Transverse colon (tissue), 4 donors: ENCODE measurements at regions of chr9 and their contacts with region 1.

Region 1: GRCh38 chr9:104177003-104177611 is 83.0 kb downstream of the SMC2 start:
- DNase-seq: no peak
- H3K4me3 ChIP-seq: no peak overlapping the region
- H3K27ac ChIP-seq: no peak overlapping the region
- H3K4me1 ChIP-seq: peaks cover 0 to 8% (median 0%) of the 10 kb centered on the region in 4 donors
- H3K27me3 ChIP-seq: no peaks in the 10 kb centered on the region
- CTCF ChIP-seq: peak; percentile 26 to 51 (median 43)
- EP300 ChIP-seq: no peak
- POLR2A ChIP-seq: no peak

Region 2: DNA sequence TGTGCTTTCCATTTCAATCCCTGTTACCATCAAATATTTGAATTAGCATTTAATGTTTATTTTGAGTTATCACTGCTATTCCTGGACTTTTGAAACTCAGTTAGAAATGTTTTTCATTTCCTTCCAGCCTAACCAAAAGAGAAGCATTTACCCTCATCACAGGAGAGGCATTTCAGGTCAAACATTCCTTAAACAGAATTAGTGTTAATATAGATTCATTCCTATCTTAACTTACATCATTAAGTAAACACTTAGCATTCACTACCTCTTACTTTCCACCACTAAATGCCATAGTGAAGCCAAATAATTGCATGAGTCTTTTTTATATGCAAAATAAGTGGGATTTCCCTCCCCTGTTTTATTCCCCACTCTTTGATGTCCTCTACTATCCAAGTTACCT is 190.4 kb after region 1 on chr9:
- in situ Hi-C with region 1: loop called in 1 of 4 experiments (anchors 25 kb)
- intact Hi-C with region 1: no loop called
- DNase-seq: no peak
- H3K4me3 ChIP-seq: no peak overlapping the region
- H3K27ac ChIP-seq: no peak overlapping the region
- H3K4me1 ChIP-seq: no peaks in the 10 kb centered on the region
- H3K27me3 ChIP-seq: no peaks in the 10 kb centered on the region
- CTCF ChIP-seq: no peak
- EP300 ChIP-seq: no peak
- POLR2A ChIP-seq: no peak

Region 3: GRCh38 chr9:104386425-104387069 is 209.4 kb after region 1 on chr9:
- in situ Hi-C with region 1: loop called in 2 of 4 experiments (anchors 10 to 25 kb)
- intact Hi-C with region 1: no loop called
- DNase-seq: no peak
- H3K4me3 ChIP-seq: no peak overlapping the region
- H3K27ac ChIP-seq: no peak overlapping the region
- H3K4me1 ChIP-seq: peaks cover 0 to 5% (median 0%) of the 10 kb centered on the region in 4 donors
- H3K27me3 ChIP-seq: no peaks in the 10 kb centered on the region
- CTCF ChIP-seq: peak; percentile 58 to 68 (median 65)
- EP300 ChIP-seq: no peak
- POLR2A ChIP-seq: no peak